GM10248 (cell line): ENCODE measurements at regions of chr13 and their contacts with region 1.

Region 1: GRCh38 chr13:75876360-75877050 is 240.4 kb downstream of the LMO7 start:
- DNase-seq: peak; percentile 42
- CTCF ChIP-seq: peak; percentile 88

Region 2: DNA sequence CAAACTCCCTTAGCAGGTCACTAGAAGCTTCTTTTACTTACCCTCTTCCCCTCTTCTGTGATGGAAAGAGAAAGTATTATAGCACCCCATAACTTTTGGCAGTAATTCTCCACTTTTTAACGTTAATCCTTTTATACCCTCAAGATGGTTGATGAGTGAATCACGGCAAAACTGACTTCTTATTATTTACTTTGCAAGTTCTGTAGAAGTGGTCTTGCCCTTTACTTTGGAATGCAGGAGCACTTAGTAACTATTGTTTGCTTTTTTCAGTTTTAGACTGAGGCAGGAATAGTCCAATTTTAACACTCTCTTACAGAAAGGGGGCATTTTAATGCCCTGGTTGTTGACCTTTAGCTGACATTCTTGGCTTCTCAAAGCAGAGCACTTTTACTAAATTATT is 19.8 kb after region 1 on chr13:
- CTCF ChIA-PET with region 1: interaction called, 40 read pairs
- POLR2A ChIA-PET with region 1: no interaction called
- DNase-seq: no peak
- CTCF ChIP-seq: no peak

Region 3: GRCh38 chr13:76016799-76017400 is 140.4 kb after region 1 on chr13:
- CTCF ChIA-PET with region 1: interaction called, 56 read pairs
- POLR2A ChIA-PET with region 1: no interaction called
- DNase-seq: peak; percentile 21
- CTCF ChIP-seq: peak; percentile 75

Region 4: GRCh38 chr13:76903544-76904162 is 1027.1 kb after region 1 on chr13:
- CTCF ChIA-PET with region 1: interaction called, 26 read pairs
- POLR2A ChIA-PET with region 1: no interaction called
- DNase-seq: peak; percentile 61
- CTCF ChIP-seq: peak; percentile 98